ENCODE measurements at regions of chr13 and their contacts with region 1.

Region 1: DNA sequence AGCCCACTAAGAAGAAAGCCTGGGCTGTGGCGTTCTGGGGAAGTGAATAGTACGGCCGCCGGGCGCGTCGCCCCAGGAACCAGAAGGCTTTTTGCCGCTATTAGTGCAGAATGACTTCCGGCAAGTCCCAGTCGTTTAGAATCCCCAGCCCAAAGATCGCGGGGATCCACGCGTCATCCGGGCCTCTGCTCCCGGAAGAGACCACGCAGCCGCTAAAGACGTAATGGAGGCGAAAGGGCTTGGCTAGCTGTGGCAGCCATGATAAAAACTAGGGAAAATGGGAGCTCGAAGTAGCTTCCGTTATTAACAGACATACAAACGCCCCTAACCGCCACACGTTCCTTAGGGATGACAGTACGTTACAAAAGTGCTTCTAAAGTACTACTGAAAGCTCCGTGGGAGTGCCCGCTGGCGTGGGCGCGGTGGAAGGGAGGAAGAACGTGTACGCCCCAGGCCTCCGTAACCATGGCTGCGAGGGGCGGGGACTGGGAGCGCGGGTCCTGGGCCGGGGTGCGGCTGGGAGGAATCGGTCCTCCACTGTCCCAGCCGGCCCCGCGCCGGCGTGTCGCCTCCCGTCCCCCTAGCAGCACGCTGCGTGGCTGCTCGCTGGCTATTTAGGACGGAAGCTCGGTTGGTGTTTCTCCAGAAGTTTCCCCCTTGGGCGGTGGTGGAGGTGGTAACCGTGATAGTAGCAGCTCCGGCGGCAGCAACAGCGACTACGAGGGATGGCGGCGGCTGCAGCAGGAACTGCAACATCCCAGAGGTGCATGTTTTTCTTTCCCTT is at the start of gene SUGT1:
- DNase-seq: peak; percentile 95 to 97
- ATAC-seq: peak; percentile 96
- H3K4me3 ChIP-seq: peak within 1 kb of the TSS; percentile 69 to 97 (median 82)
- H3K27ac ChIP-seq: peak within 1 kb of the TSS; percentile 92 to 98 (median 98)
- H3K4me1 ChIP-seq: peaks cover 26 to 30% of the 10 kb centered on the region in 2 donors
- H3K27me3 ChIP-seq: no peaks in the 10 kb centered on the region
- CTCF ChIP-seq: peak; percentile 60 to 75 (median 68)
- POLR2A ChIP-seq: peak; percentile 64 to 77
- total RNA-seq, gene SUGT1: 37.5 to 48.5 (median 40.1) TPM

Region 2: DNA sequence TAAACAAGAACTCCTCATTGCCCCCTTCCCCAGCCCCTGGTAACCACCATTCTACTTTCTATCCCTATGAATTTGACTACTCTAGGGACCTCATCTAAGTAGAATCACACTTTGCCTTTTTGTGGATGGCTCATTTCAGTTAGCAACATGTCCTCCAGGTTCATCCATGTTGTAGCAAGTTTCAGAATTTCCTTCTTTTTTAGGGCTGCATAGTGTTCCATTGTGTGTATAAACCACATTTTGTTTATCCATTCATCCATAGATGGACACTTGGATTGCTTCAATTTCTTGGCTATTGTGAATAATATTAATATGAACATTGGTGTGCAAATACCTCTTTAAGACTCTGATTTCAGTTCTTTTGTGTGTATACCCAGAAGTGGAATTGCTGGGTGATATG is 843.6 kb before region 1 on chr13:
- in situ Hi-C with region 1: no loop called
- intact Hi-C with region 1: loop called (anchors 2 kb)
- DNase-seq: no peak
- ATAC-seq: no peak
- H3K4me3 ChIP-seq: no peak overlapping the region
- H3K27ac ChIP-seq: no peak overlapping the region
- H3K4me1 ChIP-seq: peaks cover 10 to 17% of the 10 kb centered on the region in 2 donors
- H3K27me3 ChIP-seq: no peaks in the 10 kb centered on the region
- CTCF ChIP-seq: no peak
- POLR2A ChIP-seq: no peak

Region 3: GRCh38 chr13:52011632-52012511 is 640.5 kb before region 1 on chr13 and contains the start of gene ALG11:
- in situ Hi-C with region 1: no loop called
- intact Hi-C with region 1: loop called (anchors 10 kb)
- DNase-seq: peak; percentile 99
- ATAC-seq: peak; percentile 98
- H3K4me3 ChIP-seq: peak within 1 kb of the TSS; percentile 84 to 92 (median 88)
- H3K27ac ChIP-seq: peak within 1 kb of the TSS; percentile 83 to 90 (median 86)
- H3K4me1 ChIP-seq: peaks cover 24 to 25% of the 10 kb centered on the region in 2 donors
- H3K27me3 ChIP-seq: no peaks in the 10 kb centered on the region
- CTCF ChIP-seq: peak in 1 of 5 experiments; percentile 23
- POLR2A ChIP-seq: peak; percentile 44 to 64
- total RNA-seq, gene ALG11: 8.9 to 14.2 (median 10.1) TPM

Region 4: DNA sequence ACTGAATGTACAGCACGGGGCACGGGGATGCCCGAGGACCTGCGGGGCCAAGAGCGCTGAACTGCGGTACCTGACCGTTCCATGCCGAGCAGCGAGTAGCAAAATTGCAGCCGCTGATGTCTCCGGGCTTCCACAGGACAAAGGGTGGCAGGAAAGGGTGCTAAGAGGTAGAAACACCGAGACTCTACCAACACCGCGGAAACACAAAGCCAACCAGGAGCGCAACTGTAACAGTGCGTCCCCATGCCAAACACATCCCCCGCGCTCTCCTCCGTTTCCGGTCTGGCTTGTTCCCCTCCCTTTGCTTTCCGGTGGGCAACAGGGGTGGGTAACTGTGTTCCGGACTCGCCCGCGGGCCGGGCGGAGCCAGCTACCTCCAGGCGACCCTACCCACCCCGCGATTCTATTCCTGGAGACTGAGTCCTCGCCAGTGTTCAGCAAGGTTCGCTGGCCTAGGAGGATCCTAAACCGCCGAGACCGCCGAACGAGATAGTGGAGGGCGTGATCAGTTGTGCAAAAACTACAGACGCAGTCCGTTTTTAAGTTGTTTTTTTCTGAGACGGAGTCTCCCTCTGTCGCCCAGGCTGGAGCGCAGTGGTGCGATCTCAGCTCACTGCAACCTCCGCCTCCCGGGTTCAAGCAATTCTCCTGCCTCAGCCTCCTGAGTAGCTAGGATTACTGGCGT is 458.1 kb before region 1 on chr13:
- in situ Hi-C with region 1: loop called in 1 of 4 experiments (anchors 25 kb)
- intact Hi-C with region 1: loop called (anchors 10 kb)
- DNase-seq: peak; percentile 69 to 81
- ATAC-seq: peak; percentile 93 to 94
- H3K4me3 ChIP-seq: peak overlapping the region; percentile 74 to 98 (median 88)
- H3K27ac ChIP-seq: peak overlapping the region; percentile 81 to 88 (median 87)
- H3K4me1 ChIP-seq: peaks cover 11 to 25% of the 10 kb centered on the region in 2 donors
- H3K27me3 ChIP-seq: no peaks in the 10 kb centered on the region
- CTCF ChIP-seq: no peak
- POLR2A ChIP-seq: peak in 1 of 2 donors; percentile 22

Region 5: GRCh38 chr13:52599848-52600603 is 52.4 kb before region 1 on chr13:
- in situ Hi-C with region 1: no loop called
- intact Hi-C with region 1: loop called (anchors 2 kb)
- DNase-seq: peak in 1 of 2 donors; percentile 23
- ATAC-seq: peak; percentile 60 to 72
- H3K4me3 ChIP-seq: peak overlapping the region; percentile 71 to 97 (median 80)
- H3K27ac ChIP-seq: peak overlapping the region; percentile 67 to 87 (median 72)
- H3K4me1 ChIP-seq: peaks cover 7 to 13% of the 10 kb centered on the region in 2 donors
- H3K27me3 ChIP-seq: no peaks in the 10 kb centered on the region
- CTCF ChIP-seq: no peak
- POLR2A ChIP-seq: no peak

Region 6: DNA sequence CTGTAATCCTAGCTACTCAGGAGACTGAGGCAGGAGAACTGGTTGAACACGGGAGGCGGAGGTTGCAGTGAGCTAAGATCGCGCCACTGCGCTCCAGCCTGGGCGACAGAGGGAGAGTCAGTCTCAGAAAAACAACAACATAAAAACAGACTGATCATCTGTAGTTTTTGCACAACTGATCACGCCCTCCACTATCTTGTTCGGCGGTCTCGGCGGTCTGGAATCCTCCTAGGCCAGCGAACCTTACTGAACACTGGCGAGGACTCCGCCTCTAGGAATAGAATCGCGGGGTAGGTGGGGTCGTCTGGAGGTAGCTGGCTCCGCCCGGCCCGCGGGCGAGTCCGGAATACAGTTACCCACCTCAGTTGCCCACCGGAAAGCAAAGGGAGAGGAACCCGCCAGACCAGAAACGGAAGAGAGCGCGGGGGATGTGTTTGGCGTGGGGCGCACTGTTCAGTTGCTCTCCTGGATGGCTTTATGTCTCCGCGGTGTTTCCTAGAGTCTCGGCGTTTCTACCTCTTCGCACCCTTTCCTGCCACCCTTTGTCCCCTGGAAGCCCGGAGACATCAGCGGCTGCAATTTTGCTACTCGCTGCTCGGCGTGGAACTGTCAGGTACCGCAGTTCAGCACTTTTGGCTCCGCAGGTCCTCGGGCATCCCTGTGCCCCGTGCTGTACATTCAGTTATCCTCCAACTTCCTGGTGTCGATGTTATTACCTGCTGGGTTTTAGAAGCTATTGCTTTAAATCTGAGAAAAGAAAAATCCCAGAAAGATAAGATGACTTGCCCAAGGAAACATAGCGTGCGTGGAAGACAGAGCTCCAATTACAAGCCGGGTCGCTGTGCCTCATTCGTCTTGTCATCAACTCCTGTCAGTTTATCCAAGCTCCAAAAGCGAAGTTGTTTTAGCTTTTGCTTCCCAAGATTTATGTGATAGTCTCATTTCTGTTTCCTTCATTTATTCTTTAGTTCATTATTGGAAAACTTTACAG is 35.0 kb before region 1 on chr13:
- in situ Hi-C with region 1: no loop called
- intact Hi-C with region 1: loop called (anchors 1 kb)
- DNase-seq: peak; percentile 42 to 71
- ATAC-seq: peak; percentile 88 to 96
- H3K4me3 ChIP-seq: peak overlapping the region; percentile 67 to 99 (median 74)
- H3K27ac ChIP-seq: peak overlapping the region; percentile 69 to 90 (median 76)
- H3K4me1 ChIP-seq: peaks cover 3 to 6% of the 10 kb centered on the region in 2 donors
- H3K27me3 ChIP-seq: no peaks in the 10 kb centered on the region
- CTCF ChIP-seq: no peak
- POLR2A ChIP-seq: peak in 1 of 2 donors; percentile 11

Region 7: DNA sequence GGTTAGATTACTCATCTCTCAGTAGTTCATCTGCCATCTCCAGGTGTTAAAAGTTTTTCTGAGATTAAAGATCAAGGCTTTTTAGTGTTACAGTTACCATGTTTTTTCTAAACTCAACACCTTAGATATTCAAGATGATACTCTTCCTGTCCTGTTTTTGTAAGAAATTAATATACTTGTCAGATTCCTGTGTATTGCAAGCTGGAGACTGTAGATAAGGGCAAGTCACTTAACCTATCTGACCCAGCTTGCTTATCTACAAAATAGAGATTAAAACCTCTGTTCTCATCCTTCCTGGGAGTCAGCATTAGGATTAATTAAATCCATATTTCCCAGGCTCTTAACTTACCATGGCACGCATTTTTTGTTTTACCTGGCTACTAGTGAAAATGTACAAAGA is 25.4 kb after region 1 on chr13:
- in situ Hi-C with region 1: no loop called
- intact Hi-C with region 1: no loop called
- DNase-seq: no peak
- ATAC-seq: no peak
- H3K4me3 ChIP-seq: no peak overlapping the region
- H3K27ac ChIP-seq: no peak overlapping the region
- H3K4me1 ChIP-seq: no peaks in the 10 kb centered on the region
- H3K27me3 ChIP-seq: no peaks in the 10 kb centered on the region
- CTCF ChIP-seq: no peak
- POLR2A ChIP-seq: no peak

Measured in gastrocnemius medialis (tissue), 4 donors.